ENCODE measurements at regions of chr6 and their contacts with region 1.

Region 1: DNA sequence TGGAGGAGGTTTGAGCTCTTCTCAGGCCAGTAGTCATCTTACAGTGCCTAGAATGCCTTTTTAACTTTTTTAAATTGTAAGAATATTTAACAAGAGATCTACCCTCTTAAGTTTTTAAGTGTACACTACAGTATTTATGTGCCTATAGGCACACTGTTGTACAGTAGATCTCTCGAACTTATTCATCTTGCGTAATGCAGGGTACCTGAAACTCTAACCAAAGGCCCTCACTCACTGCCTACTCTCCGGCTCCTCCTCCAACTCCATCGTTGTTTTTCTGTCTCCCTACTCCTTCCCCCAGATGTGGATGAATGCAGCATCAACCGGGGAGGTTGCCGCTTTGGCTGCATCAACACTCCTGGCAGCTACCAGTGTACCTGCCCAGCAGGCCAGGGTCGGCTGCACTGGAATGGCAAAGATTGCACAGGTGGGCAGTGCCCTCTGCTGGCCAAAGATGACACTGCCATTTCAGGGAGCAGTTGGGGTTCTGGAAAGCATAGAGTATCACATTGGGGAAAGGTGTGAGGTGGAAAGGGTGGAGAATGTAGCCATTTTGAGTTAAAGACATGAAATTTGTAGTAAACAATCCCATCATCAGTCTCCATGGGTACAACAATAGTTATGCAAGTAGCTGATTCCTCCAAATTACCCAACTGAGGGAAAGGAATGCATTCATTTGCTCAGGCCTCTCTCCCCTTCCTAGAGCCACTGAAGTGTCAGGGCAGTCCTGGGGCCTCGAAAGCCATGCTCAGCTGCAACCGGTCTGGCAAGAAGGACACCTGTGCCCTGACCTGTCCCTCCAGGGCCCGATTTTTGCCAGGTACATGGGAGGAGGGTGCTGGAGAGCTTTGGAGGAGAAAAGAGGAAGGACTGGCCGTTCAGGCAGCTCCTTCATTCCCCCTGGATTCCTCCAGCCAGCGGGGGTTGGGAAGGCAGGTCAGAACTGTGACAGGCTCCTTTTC is 18.4 kb upstream of the ZNF76 start:
- DNase-seq: peak; percentile 38 to 93 (median 83)

Region 2: DNA sequence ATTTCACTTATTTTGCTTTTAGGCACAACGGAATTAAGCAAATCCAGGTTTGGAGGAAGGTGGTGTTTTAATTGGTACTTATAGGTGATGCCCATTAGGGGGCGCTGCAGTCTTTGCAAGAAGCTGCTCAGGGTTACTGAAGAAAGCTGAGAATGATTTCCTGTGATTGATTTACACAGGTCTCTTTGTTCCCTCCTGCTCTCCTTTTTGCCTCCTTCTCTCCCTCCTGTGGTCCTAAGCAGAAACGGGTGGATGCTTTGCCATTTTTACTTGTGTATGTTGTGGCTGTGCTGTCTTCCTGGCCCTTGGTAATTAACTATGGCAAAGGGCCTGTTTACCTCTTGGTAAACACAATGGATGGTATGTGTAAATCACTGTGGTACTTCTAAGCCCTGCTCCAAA is 254.3 kb before region 1 on chr6:
- intact Hi-C with region 1: loop called (anchors 10 kb)
- DNase-seq: peak; percentile 42 to 93 (median 79)

Region 3: GRCh38 chr6:35146453-35146852 is 94.7 kb before region 1 on chr6:
- intact Hi-C with region 1: loop called (anchors 5 kb)
- DNase-seq: peak; percentile 19 to 87 (median 64)

Measured in head of caudate nucleus (tissue), 42 donors.